ENCODE measurements at regions of chr7 and their contacts with region 1.

Region 1: DNA sequence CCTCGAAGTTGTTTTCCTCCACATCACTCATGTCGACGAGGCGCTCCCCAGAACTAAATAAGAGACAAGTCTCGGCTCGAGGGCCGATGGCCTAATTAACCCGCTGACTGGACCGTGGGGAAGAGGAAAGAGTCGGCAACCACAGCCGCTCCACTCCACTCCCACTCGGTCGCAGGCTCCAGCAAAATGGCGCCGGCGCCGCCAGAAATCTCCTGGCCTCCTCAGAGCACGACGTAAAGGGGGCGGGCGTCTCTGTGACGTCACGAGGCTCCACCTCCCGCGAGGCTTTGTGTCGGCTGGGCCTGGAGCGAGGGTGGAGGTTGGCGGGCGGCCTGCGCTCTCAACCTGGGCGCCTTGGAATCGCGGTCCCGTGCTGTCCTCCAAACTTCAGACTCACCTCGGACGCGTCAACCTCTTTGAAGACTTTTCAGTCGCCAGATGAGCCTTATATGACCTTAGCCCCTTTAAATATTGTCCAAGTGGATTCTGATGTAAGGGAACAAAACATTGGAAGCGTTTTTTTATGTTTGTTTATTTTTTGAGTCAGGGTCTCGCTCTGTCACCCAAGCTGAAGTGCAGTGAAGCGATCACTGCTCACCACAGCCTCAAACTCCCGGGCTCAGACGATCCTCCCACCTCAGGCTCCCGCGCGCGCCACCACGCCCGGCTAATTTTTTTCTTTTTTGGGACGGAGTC is at the start of gene TRA2A:
- DNase-seq: peak; percentile 92 to 96 (median 95)
- H3K4me3 ChIP-seq: peak within 1 kb of the TSS; percentile 67 to 90
- H3K4me3 Mint-ChIP-seq: peak within 1 kb of the TSS; percentile 98 to 100 (median 99)
- H3K27ac ChIP-seq: peak within 1 kb of the TSS; percentile 96
- H3K27ac Mint-ChIP-seq: peak within 1 kb of the TSS; percentile 100
- H3K4me1 ChIP-seq: peaks cover 40% of the 10 kb centered on the region
- H3K4me1 Mint-ChIP-seq: peaks cover 28 to 52% (median 40%) of the 10 kb centered on the region in 4 donors
- H3K27me3 ChIP-seq: no peaks in the 10 kb centered on the region
- H3K27me3 Mint-ChIP-seq: no peaks in the 10 kb centered on the region
- total RNA-seq, gene TRA2A: 143 to 145 TPM

Region 2: GRCh38 chr7:23105644-23106056 is 426.3 kb before region 1 on chr7 and contains the start of gene KLHL7:
- CTCF ChIA-PET with region 1: no interaction called
- POLR2A ChIA-PET with region 1: no interaction called
- intact Hi-C with region 1: loop called (anchors 2 kb)
- DNase-seq: peak; percentile 91 to 96 (median 93)
- H3K4me3 ChIP-seq: peak within 1 kb of the TSS; percentile 83 to 98
- H3K4me3 Mint-ChIP-seq: peak within 1 kb of the TSS; percentile 93 to 99 (median 97)
- H3K27ac ChIP-seq: peak within 1 kb of the TSS; percentile 89
- H3K27ac Mint-ChIP-seq: peak within 1 kb of the TSS; percentile 93 to 98 (median 96)
- H3K4me1 ChIP-seq: peaks cover 39% of the 10 kb centered on the region
- H3K4me1 Mint-ChIP-seq: peaks cover 28 to 56% (median 38%) of the 10 kb centered on the region in 4 donors
- H3K27me3 ChIP-seq: no peaks in the 10 kb centered on the region
- H3K27me3 Mint-ChIP-seq: no peaks in the 10 kb centered on the region
- total RNA-seq, gene KLHL7: 22.5 to 25.6 TPM

Region 3: DNA sequence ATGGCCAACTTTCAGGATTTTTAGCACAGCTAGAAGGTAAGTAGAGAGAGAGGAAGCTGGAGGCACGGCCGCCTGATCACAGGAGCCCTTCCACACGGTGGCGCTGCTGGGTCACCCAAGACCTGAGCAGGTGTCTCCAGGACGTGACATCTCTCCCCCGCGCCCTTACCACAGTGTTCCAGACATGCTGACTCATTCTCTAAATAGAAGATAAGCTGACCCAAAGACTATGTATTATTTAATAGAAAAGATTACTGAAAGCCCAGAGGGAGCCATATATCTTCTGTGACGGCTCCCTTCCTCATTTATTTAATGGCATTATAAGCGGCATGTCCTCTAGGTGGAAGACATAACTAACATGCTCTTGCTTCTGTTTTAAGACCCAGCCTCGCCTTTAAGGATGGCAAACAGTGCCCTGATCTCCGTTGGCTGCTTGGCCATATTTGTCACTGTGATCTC is 258.8 kb before region 1 on chr7:
- CTCF ChIA-PET with region 1: interaction called, 3 read pairs
- POLR2A ChIA-PET with region 1: no interaction called
- intact Hi-C with region 1: loop called (anchors 5 kb)
- DNase-seq: peak; percentile 77 to 90 (median 80)
- H3K4me3 ChIP-seq: no peak overlapping the region
- H3K4me3 Mint-ChIP-seq: peak overlapping the region in 7 of 8 donors; percentile 24 to 69 (median 65)
- H3K27ac ChIP-seq: no peak overlapping the region
- H3K27ac Mint-ChIP-seq: peak overlapping the region in 3 of 7 donors; percentile 4 to 18 (median 12)
- H3K4me1 ChIP-seq: peaks cover 4% of the 10 kb centered on the region
- H3K4me1 Mint-ChIP-seq: peaks cover 0 to 15% (median 7%) of the 10 kb centered on the region in 4 donors
- H3K27me3 ChIP-seq: no peaks in the 10 kb centered on the region
- H3K27me3 Mint-ChIP-seq: peaks cover 0 to 6% of the 10 kb centered on the region in 2 donors

Region 4: DNA sequence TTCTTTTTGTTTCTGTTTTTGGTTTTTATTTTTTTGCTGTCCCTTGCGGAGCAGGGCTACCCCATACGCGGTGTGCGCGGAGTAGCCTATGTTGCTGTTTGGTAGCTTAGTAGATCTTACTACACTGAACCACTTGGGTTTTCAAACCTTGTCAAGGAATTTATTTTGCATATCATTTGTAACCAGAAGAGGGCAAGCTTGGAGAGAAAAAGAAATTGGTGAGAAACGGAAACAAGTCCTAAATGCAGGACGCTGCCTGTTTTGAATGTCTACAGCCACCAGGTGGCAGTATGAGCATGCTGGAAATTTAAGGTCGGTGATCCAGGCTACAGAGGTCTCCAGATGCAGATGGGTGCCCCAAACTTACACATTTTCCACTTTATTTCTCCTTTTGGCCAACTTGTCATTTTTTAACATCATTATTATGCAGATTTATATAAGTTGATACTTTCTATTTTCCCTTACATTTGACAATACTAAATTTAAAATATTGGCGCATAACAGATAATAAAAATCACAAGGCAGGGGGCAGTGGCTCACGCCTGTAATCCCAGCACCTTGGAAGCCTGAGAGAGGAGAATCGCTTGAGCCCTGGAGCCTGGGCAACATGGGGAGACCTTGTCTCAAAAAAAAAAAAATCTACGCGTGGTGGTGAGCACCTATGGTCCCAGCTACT is 15.1 kb after region 1 on chr7:
- CTCF ChIA-PET with region 1: interaction called, 24 read pairs
- POLR2A ChIA-PET with region 1: interaction called, 11 read pairs
- intact Hi-C with region 1: loop called (anchors 1 kb)
- DNase-seq: peak; percentile 78 to 85 (median 84)
- H3K4me3 ChIP-seq: no peak overlapping the region
- H3K4me3 Mint-ChIP-seq: peak overlapping the region in 1 of 8 donors; percentile 39
- H3K27ac ChIP-seq: no peak overlapping the region
- H3K27ac Mint-ChIP-seq: peak overlapping the region in 5 of 7 donors; percentile 0 to 68 (median 51)
- H3K4me1 ChIP-seq: no peaks in the 10 kb centered on the region
- H3K4me1 Mint-ChIP-seq: peaks cover 5 to 7% (median 6%) of the 10 kb centered on the region in 4 donors
- H3K27me3 ChIP-seq: no peaks in the 10 kb centered on the region
- H3K27me3 Mint-ChIP-seq: no peaks in the 10 kb centered on the region

Region 5: DNA sequence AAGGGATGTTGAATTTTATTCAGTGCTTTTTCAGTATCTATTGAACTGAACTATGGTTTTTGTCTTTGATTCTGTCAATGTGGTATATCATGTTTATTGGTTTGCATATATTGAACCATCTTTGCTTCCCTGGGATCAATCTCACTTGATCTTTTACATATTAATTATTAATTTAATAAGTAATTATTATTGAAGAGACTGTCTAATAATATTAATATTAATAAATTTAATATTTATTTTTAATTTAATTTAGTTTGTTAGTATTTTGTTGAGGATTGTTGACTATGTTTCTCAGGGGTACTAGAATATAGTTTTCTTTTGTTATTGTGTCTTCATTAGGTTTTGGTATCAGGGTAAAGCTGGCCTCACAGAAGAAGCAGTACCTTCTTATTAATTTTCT is 26.4 kb after region 1 on chr7:
- CTCF ChIA-PET with region 1: no interaction called
- POLR2A ChIA-PET with region 1: no interaction called
- intact Hi-C with region 1: no loop called
- DNase-seq: no peak
- H3K4me3 ChIP-seq: no peak overlapping the region
- H3K4me3 Mint-ChIP-seq: no peak overlapping the region
- H3K27ac ChIP-seq: no peak overlapping the region
- H3K27ac Mint-ChIP-seq: no peak overlapping the region
- H3K4me1 ChIP-seq: no peaks in the 10 kb centered on the region
- H3K4me1 Mint-ChIP-seq: no peaks in the 10 kb centered on the region
- H3K27me3 ChIP-seq: no peaks in the 10 kb centered on the region
- H3K27me3 Mint-ChIP-seq: peaks cover 6% of the 10 kb centered on the region in 2 donors

Region 6: GRCh38 chr7:23628370-23628769 is 96.4 kb after region 1 on chr7:
- CTCF ChIA-PET with region 1: no interaction called
- POLR2A ChIA-PET with region 1: no interaction called
- intact Hi-C with region 1: no loop called
- DNase-seq: no peak
- H3K4me3 ChIP-seq: no peak overlapping the region
- H3K4me3 Mint-ChIP-seq: no peak overlapping the region
- H3K27ac ChIP-seq: no peak overlapping the region
- H3K27ac Mint-ChIP-seq: no peak overlapping the region
- H3K4me1 ChIP-seq: no peaks in the 10 kb centered on the region
- H3K4me1 Mint-ChIP-seq: peaks cover 0 to 4% (median 2%) of the 10 kb centered on the region in 4 donors
- H3K27me3 ChIP-seq: no peaks in the 10 kb centered on the region
- H3K27me3 Mint-ChIP-seq: no peaks in the 10 kb centered on the region

Region 7: GRCh38 chr7:23888958-23889357 is 357.0 kb after region 1 on chr7:
- CTCF ChIA-PET with region 1: no interaction called
- POLR2A ChIA-PET with region 1: no interaction called
- intact Hi-C with region 1: no loop called
- DNase-seq: no peak
- H3K4me3 ChIP-seq: no peak overlapping the region
- H3K4me3 Mint-ChIP-seq: no peak overlapping the region
- H3K27ac ChIP-seq: no peak overlapping the region
- H3K27ac Mint-ChIP-seq: no peak overlapping the region
- H3K4me1 ChIP-seq: peaks cover 5% of the 10 kb centered on the region
- H3K4me1 Mint-ChIP-seq: peaks cover 3 to 20% (median 13%) of the 10 kb centered on the region in 4 donors
- H3K27me3 ChIP-seq: no peaks in the 10 kb centered on the region
- H3K27me3 Mint-ChIP-seq: peaks cover 1 to 2% of the 10 kb centered on the region in 2 donors

Region 8: GRCh38 chr7:25125137-25125946 is 1593.4 kb after region 1 on chr7 and contains the start of gene CYCS:
- CTCF ChIA-PET with region 1: no interaction called
- POLR2A ChIA-PET with region 1: interaction called, 4 read pairs
- intact Hi-C with region 1: loop called (anchors 10 kb)
- DNase-seq: peak; percentile 99 to 100 (median 99)
- H3K4me3 ChIP-seq: peak within 1 kb of the TSS; percentile 72 to 82
- H3K4me3 Mint-ChIP-seq: peak within 1 kb of the TSS; percentile 97 to 100 (median 100)
- H3K27ac ChIP-seq: peak within 1 kb of the TSS; percentile 97
- H3K27ac Mint-ChIP-seq: peak within 1 kb of the TSS; percentile 96 to 100 (median 100)
- H3K4me1 ChIP-seq: peaks cover 9% of the 10 kb centered on the region
- H3K4me1 Mint-ChIP-seq: peaks cover 14 to 26% (median 15%) of the 10 kb centered on the region in 4 donors
- H3K27me3 ChIP-seq: no peaks in the 10 kb centered on the region
- H3K27me3 Mint-ChIP-seq: no peaks in the 10 kb centered on the region
- total RNA-seq, gene CYCS: 46.9 to 54.2 TPM